ENCODE measurements at regions of chr1 and their contacts with region 1.

Region 1: GRCh38 chr1:220690140-220691025 is at the start of gene C1orf115:
- DNase-seq: peak; percentile 76 to 92 (median 91)
- ATAC-seq: peak; percentile 97
- H3K4me3 ChIP-seq: peak within 1 kb of the TSS; percentile 79
- H3K27ac ChIP-seq: peak within 1 kb of the TSS; percentile 16
- H3K4me1 ChIP-seq: no peaks in the 10 kb centered on the region
- H3K27me3 ChIP-seq: no peaks in the 10 kb centered on the region
- total RNA-seq, gene C1orf115: 10.3 to 16.1 (median 12.7) TPM

Region 2: DNA sequence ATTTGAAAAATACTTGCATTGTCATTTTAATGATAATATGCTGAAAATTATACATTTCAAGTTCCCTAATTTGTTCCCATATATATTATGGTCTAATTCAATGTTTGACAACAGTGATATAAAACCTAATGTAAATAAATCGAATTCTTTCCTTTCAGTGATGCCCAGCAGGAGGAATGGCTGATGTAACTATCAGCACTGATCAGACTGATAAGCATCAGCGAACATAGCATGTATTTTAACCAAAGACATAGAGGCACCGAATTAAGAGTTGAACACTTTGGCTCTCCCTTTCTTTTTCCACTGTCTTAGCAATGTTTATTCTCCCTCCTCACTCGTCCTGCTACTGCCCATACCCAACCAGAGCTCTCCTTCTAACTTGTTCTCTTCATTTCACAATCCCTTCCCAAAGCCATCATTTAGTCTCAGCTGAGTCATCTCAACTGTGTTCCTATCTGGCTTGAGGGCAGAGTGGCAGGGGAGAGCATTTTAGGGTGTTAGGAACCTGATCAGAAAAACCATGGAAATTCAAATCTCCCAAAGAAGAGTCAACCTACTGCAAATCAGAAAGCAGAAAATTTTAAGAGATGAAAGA is 59.0 kb before region 1 on chr1:
- intact Hi-C with region 1: no loop called
- DNase-seq: no peak
- ATAC-seq: no peak
- H3K4me3 ChIP-seq: no peak overlapping the region
- H3K27ac ChIP-seq: no peak overlapping the region
- H3K4me1 ChIP-seq: no peaks in the 10 kb centered on the region
- H3K27me3 ChIP-seq: no peaks in the 10 kb centered on the region

Region 3: DNA sequence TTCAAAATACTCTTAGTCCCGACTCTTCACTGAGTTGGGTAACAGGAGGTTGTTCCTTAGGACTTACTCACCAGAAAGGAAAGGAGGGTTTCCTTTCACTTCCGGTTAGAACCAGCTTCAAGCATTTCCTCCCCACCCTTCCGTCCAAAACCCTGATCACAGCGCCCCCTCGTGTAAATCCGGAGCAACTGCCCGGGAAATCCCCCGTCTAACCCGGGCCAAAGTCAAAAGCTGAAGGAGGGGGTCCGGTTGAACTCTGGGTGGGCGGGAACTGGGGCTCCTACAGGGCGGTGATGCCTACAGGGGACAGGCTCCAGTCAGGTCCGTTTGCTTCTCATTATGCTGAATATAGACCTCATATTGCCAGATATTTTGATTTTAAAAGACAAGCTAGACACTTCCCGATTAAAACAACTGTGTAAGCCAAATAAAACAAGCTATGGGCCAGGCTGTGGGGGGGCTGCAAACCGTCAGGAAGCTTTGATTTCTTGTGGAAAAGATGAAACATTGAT is 42.8 kb after region 1 on chr1:
- intact Hi-C with region 1: loop called in 3 of 4 experiments (anchors 2 to 5 kb)
- DNase-seq: peak; percentile 80 to 89 (median 82)
- ATAC-seq: peak; percentile 93 to 98
- H3K4me3 ChIP-seq: peak overlapping the region; percentile 55
- H3K27ac ChIP-seq: peak overlapping the region; percentile 94
- H3K4me1 ChIP-seq: peaks cover 6% of the 10 kb centered on the region
- H3K27me3 ChIP-seq: no peaks in the 10 kb centered on the region

Region 4: GRCh38 chr1:220776720-220777326 is 86.4 kb after region 1 on chr1:
- intact Hi-C with region 1: loop called in 1 of 4 experiments (anchors 5 kb)
- DNase-seq: peak; percentile 80 to 93 (median 93)
- ATAC-seq: peak; percentile 93 to 95
- H3K4me3 ChIP-seq: no peak overlapping the region
- H3K27ac ChIP-seq: no peak overlapping the region
- H3K4me1 ChIP-seq: no peaks in the 10 kb centered on the region
- H3K27me3 ChIP-seq: no peaks in the 10 kb centered on the region